ENCODE measurements at regions of chr6 and their contacts with region 1.

Region 1: DNA sequence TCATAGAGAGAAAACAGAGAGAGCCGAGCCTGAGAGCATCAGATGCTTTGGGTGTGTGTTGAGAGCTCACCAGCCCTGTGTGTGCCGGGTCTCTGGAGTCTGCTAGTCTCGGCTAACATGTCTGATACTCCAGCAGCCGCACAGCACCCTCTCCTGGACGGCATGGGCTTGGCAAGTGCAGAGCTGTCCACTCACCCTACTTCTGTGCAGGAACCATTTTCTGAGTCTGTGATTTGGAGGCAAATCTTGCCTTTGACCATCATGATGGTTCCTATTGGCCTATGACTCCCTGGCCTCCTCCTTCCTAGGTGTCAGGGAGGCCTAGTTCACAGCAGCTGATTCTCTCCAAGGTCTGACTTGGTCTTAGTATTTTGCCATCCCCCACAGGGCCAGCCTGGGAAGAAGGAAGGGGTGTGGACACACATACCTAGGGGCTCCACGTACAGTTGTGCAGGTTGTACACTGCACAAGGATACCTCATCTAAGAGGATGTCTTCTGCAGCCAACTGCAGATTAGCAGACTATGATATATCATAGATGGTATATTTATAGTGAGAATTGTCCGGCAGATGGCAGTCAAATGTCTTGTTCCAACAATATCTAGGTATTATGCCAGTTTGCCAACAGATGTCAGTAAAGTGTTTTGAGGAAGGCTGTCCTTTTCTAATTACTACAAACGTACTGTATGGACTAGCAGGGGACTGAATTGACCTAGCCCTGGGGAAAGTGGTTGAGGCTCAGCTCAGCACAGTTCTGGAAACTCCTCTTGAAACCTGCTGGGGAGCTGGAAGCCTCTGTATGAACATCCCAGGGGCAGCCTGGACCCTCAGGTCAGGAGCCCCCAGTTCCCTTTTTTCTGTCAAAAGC is 13.0 kb downstream of the FGD2 start:
- DNase-seq: peak; percentile 83 to 87
- H3K4me3 ChIP-seq: no peak overlapping the region
- H3K27ac ChIP-seq: peak overlapping the region; percentile 57 to 78
- H3K4me1 ChIP-seq: peaks cover 3 to 7% of the 10 kb centered on the region in 2 donors
- H3K27me3 ChIP-seq: no peaks in the 10 kb centered on the region
- CTCF ChIP-seq: peak; percentile 38 to 86 (median 78)
- POLR2A ChIP-seq: no peak

Region 2: DNA sequence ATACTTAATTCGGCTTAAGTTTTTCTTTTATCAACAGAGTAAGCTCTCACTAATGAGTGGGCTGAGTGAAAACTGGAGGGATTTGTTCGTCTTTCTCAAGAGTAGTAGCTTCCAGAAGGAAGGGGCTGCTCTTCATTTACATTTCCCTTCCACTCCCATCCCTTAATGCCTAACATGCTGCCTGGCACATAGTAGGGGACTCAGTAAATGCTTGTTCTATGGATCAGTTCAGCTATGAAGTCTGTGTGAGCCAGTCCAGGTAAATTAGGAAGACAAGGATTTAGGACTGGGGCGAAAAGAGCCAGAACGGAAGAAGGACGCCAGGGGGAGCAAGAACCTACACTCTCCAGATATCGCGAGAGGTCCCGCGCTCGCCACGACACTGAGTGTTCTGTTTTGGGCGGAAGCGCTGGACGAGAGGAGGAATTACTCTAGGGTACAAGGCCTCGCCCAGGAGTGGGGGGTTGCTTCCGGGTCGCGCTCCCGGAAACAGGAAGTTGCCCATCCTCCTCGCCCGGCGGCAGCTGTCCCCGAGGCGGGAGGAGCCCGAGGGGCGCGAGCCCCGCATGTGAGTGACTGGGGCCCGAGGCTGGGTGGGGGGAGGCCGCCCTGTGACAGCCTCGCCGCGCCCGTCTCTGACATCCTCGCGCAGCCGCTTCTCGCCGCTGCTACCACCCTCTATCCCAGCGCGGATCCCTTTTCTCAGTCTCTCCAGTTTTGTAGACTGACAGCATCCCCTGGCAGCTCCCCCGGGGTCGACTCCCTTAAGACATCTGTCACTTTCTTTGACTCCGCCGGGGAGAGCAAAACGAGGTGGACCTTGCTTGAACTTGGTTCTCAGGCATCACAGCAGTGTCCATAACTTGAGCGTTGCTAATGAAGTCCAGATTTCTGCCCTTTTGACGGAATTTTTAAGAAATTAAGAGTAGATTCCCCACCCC is 132.7 kb before region 1 on chr6 and contains the start of gene C6orf89:
- intact Hi-C with region 1: loop called (anchors 10 kb)
- DNase-seq: peak; percentile 97 to 98
- H3K4me3 ChIP-seq: peak within 1 kb of the TSS; percentile 73 to 74 (median 73)
- H3K27ac ChIP-seq: peak within 1 kb of the TSS; percentile 92 to 94
- H3K4me1 ChIP-seq: peaks cover 0 to 10% of the 10 kb centered on the region in 2 donors
- H3K27me3 ChIP-seq: no peaks in the 10 kb centered on the region
- CTCF ChIP-seq: peak; percentile 84 to 97 (median 92)
- POLR2A ChIP-seq: no peak
- total RNA-seq, gene C6orf89: 32.8 to 58.7 (median 45.4) TPM

Region 3: DNA sequence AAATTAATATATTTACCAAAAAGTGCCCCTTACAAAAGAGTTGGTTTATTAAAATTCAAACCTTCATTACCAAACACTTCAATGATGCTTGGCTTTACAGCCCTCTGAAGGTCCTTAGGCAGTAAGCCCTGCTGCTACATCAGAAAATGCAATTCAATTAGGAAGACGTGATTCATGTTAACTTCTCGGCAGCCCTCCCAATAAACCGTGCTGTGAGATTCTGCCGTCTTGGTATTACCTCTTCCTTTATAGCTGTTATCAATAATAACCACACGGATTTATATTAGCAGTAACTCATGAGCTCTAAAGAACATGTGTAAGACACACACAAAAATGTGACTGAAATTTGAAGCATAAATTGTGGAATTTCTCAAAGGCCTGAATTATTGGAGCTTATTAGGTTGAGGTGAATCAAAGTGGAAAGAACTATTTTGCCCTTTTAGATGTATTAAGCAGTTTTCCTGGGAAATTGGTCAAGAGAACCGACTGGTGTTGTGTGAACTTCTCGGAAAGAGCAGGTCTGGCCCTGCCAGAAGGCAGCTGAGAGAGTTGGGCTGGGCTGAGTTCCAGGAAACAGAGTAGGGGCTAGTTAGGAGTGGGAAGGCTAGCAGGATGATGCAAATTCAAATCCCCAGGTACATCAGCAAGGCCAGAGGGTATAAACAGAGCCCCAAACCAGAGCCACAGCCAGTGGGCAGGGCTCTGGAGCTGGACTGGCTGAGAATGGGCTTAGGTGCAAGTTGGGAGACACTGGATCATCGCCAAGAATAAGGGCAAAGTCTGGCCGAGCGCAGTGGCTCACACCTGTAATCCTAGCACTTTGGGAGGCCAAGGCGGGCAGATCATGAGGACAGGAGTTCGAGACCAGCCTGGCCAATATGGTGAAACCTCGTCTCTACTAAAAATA is 20.1 kb after region 1 on chr6:
- intact Hi-C with region 1: no loop called
- DNase-seq: peak in 1 of 2 donors; percentile 54
- H3K4me3 ChIP-seq: no peak overlapping the region
- H3K27ac ChIP-seq: peak overlapping the region; percentile 21 to 64
- H3K4me1 ChIP-seq: no peaks in the 10 kb centered on the region
- H3K27me3 ChIP-seq: no peaks in the 10 kb centered on the region
- CTCF ChIP-seq: no peak
- POLR2A ChIP-seq: no peak

Region 4: DNA sequence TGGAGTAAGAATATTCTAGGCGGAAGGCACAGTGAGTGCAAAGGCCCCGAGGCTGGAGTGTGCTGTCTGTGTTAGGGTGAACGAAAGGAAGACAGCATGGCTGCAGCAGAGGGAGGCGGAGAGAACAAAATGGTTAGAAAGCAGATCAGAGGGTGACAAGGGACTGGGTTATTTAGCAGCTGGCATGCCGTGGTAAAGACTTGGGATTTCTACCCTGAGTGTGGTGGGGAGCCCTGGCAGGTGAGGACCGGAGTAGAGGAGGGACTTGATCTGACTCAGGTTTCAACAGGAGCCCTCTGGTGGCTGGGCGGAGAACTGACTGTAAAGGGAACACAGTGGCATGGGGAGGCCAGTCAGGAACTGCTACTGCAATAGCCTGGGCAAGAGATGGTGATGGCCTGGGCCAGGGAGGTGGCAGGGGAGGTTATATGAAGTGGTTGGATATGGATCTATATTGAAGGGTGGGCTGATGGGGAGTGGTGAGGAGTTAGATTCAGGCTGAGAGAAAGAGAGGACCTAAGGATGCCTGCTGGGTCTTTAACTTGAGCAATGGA is 189.5 kb after region 1 on chr6:
- intact Hi-C with region 1: loop called (anchors 5 kb)
- DNase-seq: peak; percentile 61 to 77
- H3K4me3 ChIP-seq: no peak overlapping the region
- H3K27ac ChIP-seq: no peak overlapping the region
- H3K4me1 ChIP-seq: no peaks in the 10 kb centered on the region
- H3K27me3 ChIP-seq: no peaks in the 10 kb centered on the region
- CTCF ChIP-seq: peak; percentile 34 to 53 (median 49)
- POLR2A ChIP-seq: no peak